T-cell (primary cell): ENCODE measurements at regions of chr10 and their contacts with region 1.

Region 1: DNA sequence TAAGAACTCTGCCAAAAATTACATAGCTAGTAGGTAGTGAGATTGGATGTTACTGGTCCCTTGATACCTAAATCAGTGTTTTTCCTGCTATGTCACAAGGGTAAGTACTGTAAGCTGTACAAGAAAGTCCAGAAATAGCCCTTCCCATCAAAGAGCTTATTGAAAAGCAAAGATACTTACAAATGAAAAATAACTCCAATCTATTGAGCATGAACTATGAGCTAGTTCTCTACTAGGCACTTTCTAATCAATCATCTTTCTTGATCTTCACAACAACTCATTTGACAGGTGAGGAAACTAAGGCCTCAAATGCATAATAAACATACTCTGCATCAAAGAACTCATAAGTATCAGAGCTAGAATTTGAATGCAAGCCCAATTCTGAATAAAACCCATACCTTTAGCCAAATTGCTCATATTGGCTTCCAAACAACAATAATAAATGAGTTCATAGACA is 249.8 kb upstream of the TCF7L2 start:
- DNase-seq: no peak
- ATAC-seq: no peak
- H3K4me3 ChIP-seq: no peak overlapping the region
- H3K4me3 Mint-ChIP-seq: no peak overlapping the region
- H3K27ac ChIP-seq: no peak overlapping the region
- H3K27ac Mint-ChIP-seq: no peak overlapping the region
- H3K4me1 ChIP-seq: no peaks in the 10 kb centered on the region
- H3K4me1 Mint-ChIP-seq: no peaks in the 10 kb centered on the region
- H3K27me3 ChIP-seq: no peaks in the 10 kb centered on the region
- H3K27me3 Mint-ChIP-seq: no peaks in the 10 kb centered on the region

Region 2: DNA sequence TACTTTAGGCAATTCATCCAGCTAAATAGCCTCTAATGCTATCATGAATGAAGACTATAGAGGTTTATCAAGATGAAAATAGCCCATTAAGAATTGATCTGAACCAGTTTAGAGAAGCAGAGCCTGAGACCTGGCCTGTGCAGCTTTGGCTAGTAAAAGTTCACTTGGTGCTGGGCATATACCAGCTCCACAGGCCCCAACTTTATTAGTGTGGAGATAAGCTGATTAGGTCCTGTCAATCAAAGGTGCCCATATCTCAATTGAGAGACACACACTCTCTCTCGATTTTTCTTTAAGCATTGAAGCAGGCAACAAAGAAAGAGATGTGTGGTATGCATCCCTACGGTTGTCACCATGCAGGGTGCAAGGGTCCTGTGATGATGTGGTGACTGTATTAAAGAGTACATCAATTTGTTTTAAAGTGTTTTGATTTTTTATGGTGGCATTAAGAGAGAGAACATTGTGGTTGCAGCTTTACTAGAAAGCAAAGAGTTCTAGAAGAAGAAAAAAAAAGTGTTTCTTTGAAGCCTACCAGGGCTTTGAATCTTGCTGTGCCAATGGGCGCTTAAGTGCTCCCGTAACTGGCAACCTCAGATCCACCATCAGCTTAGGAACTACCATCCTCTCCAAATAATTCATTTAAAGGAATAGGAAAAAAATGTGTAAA is 141.6 kb before region 1 on chr10:
- CTCF ChIA-PET with region 1: no interaction called
- POLR2A ChIA-PET with region 1: no interaction called
- DNase-seq: no peak
- ATAC-seq: no peak
- H3K4me3 ChIP-seq: no peak overlapping the region
- H3K4me3 Mint-ChIP-seq: no peak overlapping the region
- H3K27ac ChIP-seq: no peak overlapping the region
- H3K27ac Mint-ChIP-seq: no peak overlapping the region
- H3K4me1 ChIP-seq: peaks cover 0 to 14% of the 10 kb centered on the region in 2 experiments
- H3K4me1 Mint-ChIP-seq: peaks cover 9 to 29% (median 20%) of the 10 kb centered on the region in 3 donors
- H3K27me3 ChIP-seq: no peaks in the 10 kb centered on the region
- H3K27me3 Mint-ChIP-seq: no peaks in the 10 kb centered on the region

Region 3: DNA sequence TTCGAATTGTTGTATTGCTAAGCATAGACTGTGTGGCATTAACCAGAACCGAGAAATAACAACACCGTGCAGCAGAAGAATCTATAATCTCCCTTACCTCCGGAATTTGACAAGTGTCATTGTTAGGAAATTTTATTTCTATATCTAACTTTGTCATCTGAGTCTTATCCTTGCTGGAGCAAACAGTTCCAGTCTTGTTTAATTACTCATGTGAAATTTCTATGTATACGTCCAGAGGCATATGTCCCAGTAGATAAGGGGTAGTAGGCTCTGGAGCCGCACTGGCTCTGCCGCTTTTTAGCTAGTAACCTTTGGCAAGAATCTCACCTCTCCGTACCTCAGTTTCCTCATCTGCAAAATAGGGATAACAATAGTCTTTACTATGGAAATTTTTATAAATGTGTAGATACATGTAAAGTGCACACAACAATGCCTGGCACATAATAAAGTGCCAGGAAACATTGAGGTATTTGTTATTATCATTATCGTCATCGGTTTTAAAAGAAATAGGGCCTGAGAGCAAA is 24.6 kb before region 1 on chr10:
- CTCF ChIA-PET with region 1: no interaction called
- POLR2A ChIA-PET with region 1: no interaction called
- DNase-seq: no peak
- ATAC-seq: no peak
- H3K4me3 ChIP-seq: no peak overlapping the region
- H3K4me3 Mint-ChIP-seq: no peak overlapping the region
- H3K27ac ChIP-seq: no peak overlapping the region
- H3K27ac Mint-ChIP-seq: no peak overlapping the region
- H3K4me1 ChIP-seq: no peaks in the 10 kb centered on the region
- H3K4me1 Mint-ChIP-seq: no peaks in the 10 kb centered on the region
- H3K27me3 ChIP-seq: no peaks in the 10 kb centered on the region
- H3K27me3 Mint-ChIP-seq: no peaks in the 10 kb centered on the region

Region 4: GRCh38 chr10:113616233-113617074 is 916.2 kb after region 1 on chr10:
- CTCF ChIA-PET with region 1: no interaction called
- POLR2A ChIA-PET with region 1: no interaction called
- DNase-seq: no peak
- ATAC-seq: no peak
- H3K4me3 ChIP-seq: no peak overlapping the region
- H3K4me3 Mint-ChIP-seq: no peak overlapping the region
- H3K27ac ChIP-seq: no peak overlapping the region
- H3K27ac Mint-ChIP-seq: no peak overlapping the region
- H3K4me1 ChIP-seq: no peaks in the 10 kb centered on the region
- H3K4me1 Mint-ChIP-seq: no peaks in the 10 kb centered on the region
- H3K27me3 ChIP-seq: peaks cover 2 to 19% of the 10 kb centered on the region in 2 experiments
- H3K27me3 Mint-ChIP-seq: peaks cover 42 to 50% of the 10 kb centered on the region in 2 donors

Region 5: GRCh38 chr10:113914956-113915355 is 1214.7 kb after region 1 on chr10:
- CTCF ChIA-PET with region 1: no interaction called
- POLR2A ChIA-PET with region 1: interaction called in 1 of 2 experiments, 13 read pairs
- DNase-seq: no peak
- ATAC-seq: no peak
- H3K4me3 ChIP-seq: no peak overlapping the region
- H3K4me3 Mint-ChIP-seq: no peak overlapping the region
- H3K27ac ChIP-seq: no peak overlapping the region
- H3K27ac Mint-ChIP-seq: no peak overlapping the region
- H3K4me1 ChIP-seq: no peaks in the 10 kb centered on the region
- H3K4me1 Mint-ChIP-seq: no peaks in the 10 kb centered on the region
- H3K27me3 ChIP-seq: no peaks in the 10 kb centered on the region
- H3K27me3 Mint-ChIP-seq: no peaks in the 10 kb centered on the region